Transverse colon (tissue), 4 donors: ENCODE measurements at regions of chr10 and their contacts with region 1.

Region 1: GRCh38 chr10:71285180-71285545 is 33.9 kb upstream of the SLC29A3 start:
- DNase-seq: peak; percentile 39
- H3K4me3 ChIP-seq: no peak overlapping the region
- H3K27ac ChIP-seq: no peak overlapping the region
- H3K4me1 ChIP-seq: no peaks in the 10 kb centered on the region
- H3K27me3 ChIP-seq: no peaks in the 10 kb centered on the region
- CTCF ChIP-seq: peak; percentile 61 to 76 (median 69)
- EP300 ChIP-seq: no peak
- POLR2A ChIP-seq: no peak

Region 2: DNA sequence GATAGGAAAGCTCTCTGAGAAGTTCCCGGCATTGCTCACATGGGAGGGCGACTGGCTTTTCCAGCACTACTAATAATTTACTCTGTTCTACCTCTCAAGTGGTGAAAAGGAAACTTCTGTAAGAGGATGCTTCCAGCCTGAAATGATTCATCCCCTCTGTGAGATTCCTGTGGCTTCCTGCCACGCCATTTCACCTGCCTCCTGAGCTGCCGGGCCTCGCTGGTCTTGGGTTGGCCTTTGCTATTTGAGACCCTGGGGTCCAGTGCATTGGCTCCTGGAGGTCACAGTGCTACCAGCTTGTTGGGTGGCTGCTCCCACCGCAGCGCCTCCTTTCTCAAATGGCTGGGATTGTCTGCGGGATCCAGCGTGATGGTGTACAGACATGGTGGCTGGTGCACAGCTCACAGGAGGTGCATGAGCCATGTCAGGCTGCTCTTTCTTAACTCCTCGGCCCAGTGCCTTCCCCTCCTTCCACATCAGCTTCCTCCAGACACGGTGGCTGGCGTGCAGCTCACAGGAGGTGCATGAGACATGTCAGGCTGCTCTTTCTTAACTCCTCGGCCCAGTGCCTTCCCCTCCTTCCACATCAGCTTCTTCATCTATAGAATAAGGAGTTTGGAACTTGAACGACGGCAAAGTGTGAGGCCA is 353.9 kb before region 1 on chr10:
- in situ Hi-C with region 1: loop called in 3 of 4 experiments (anchors 10 kb)
- intact Hi-C with region 1: loop called (anchors 5 kb)
- DNase-seq: no peak
- H3K4me3 ChIP-seq: no peak overlapping the region
- H3K27ac ChIP-seq: no peak overlapping the region
- H3K4me1 ChIP-seq: no peaks in the 10 kb centered on the region
- H3K27me3 ChIP-seq: peaks cover 16% of the 10 kb centered on the region
- CTCF ChIP-seq: no peak
- EP300 ChIP-seq: no peak
- POLR2A ChIP-seq: no peak

Region 3: GRCh38 chr10:71045204-71045809 is 239.9 kb before region 1 on chr10:
- in situ Hi-C with region 1: no loop called
- intact Hi-C with region 1: no loop called
- DNase-seq: no peak
- H3K4me3 ChIP-seq: no peak overlapping the region
- H3K27ac ChIP-seq: no peak overlapping the region
- H3K4me1 ChIP-seq: no peaks in the 10 kb centered on the region
- H3K27me3 ChIP-seq: no peaks in the 10 kb centered on the region
- CTCF ChIP-seq: no peak
- EP300 ChIP-seq: no peak
- POLR2A ChIP-seq: no peak